Esophagus muscularis mucosa (tissue), 4 donors: ENCODE measurements at regions of chr5 and their contacts with region 1.

Region 1: GRCh38 chr5:80487829-80488721 is at the start of gene FAM151B:
- DNase-seq: peak; percentile 92
- H3K4me3 ChIP-seq: peak within 1 kb of the TSS; percentile 69 to 85 (median 75)
- H3K27ac ChIP-seq: peak within 1 kb of the TSS; percentile 75 to 88 (median 82)
- H3K4me1 ChIP-seq: peaks cover 0 to 14% (median 12%) of the 10 kb centered on the region in 4 donors
- H3K27me3 ChIP-seq: no peaks in the 10 kb centered on the region
- CTCF ChIP-seq: peak in 1 of 3 experiments; percentile 16
- EP300 ChIP-seq: no peak
- POLR2A ChIP-seq: no peak
- total RNA-seq, gene FAM151B: 1.6 to 2.6 (median 2.2) TPM

Region 2: GRCh38 chr5:80672140-80672736 is 184.2 kb after region 1 on chr5:
- intact Hi-C with region 1: loop called (anchors 5 kb)
- DNase-seq: no peak
- H3K4me3 ChIP-seq: no peak overlapping the region
- H3K27ac ChIP-seq: no peak overlapping the region
- H3K4me1 ChIP-seq: peaks cover 0 to 2% (median 0%) of the 10 kb centered on the region in 4 donors
- H3K27me3 ChIP-seq: no peaks in the 10 kb centered on the region
- CTCF ChIP-seq: peak; percentile 59 to 83 (median 67)
- EP300 ChIP-seq: no peak
- POLR2A ChIP-seq: no peak